Dorsolateral prefrontal cortex (tissue), 120 donors: ENCODE measurements at regions of chr16 and their contacts with region 1.

Region 1: DNA sequence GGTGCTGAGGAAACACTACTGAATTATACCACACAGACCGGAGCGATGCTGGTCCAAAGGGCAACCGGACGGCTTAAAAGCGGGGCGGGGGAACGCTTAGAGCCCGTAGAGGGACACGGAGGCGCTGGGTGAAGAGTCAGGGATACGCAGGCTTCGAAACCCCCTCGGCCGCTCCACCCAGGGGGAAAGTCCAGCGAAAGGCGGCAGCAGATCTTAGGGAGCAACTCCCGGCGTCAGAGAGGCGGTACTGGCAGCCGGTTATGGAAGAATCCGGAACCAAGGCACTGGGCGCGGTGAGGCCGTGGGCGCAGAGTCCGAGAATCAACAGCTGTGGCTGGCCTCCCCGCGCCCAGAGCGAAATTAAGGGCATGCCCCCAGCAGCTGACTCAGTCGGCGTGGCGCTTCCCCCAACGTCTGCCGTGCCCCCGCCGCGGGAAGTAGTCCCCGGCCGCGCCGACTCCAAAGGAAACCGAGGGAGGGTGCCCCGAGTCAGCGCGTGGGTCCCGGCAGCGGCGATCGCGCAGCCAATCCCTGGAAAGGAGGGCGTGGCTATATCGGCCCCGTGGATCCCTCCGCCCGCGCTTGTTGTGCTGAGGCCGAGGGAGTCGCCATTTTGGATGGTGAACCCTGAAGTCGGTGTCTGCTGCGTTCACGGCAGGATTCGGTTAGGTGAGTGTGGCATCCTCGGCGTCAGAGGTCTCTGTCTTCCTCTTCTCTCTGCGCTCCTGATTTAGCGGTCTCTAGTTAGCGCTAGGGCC is at the start of gene IST1:
- DNase-seq: peak; percentile 95 to 99 (median 98)
- H3K4me3 ChIP-seq: peak within 1 kb of the TSS; percentile 69 to 100 (median 98)
- H3K27ac ChIP-seq: peak within 1 kb of the TSS; percentile 79 to 99 (median 96)
- H3K27me3 ChIP-seq: no peaks in the 10 kb centered on the region
- CTCF ChIP-seq: peak in 25 of 56 donors; percentile 3 to 54 (median 24)
- total RNA-seq, gene IST1: 70.6 to 245 (median 162) TPM

Region 2: DNA sequence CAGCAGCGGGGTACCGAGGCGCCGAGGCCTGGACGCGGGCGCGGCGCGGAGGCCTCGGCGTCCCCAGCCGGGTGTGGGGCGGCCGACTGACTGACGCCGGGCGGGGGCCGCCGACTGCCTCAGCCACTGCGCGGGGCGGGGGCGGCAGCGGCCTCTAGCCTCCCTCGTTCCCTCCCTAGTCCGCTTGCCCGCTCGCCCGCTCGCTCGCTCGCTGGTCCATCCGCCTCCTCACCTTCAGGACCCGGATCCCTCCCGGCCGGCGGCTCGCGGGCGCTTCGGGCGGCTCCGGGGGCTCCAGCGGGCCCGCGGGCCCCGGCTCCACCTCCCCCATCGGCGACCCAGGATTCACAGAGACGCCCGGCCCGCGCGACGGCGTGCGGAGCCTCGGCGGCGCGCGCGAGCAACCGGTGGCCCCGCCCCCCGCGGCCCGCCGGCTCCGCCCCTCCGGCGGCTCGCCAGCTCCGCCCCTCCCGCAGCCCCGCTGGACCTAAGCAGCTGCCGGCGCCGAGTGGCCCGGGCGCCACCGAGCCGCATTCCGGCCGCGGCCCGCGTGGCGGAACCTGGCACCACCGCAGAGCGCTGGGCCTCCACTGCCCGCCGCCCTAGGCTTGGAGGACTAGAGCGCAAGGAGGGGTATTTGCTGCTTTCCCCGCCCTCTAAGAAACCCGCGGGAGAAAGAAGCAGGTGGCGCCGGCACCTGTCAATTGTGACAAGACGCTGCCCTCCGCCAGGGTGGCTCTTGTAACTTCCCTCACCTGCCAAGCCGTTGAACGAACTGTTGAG is 171.4 kb before region 1 on chr16:
- intact Hi-C with region 1: loop called in 1 of 2 experiments (anchors 10 kb)
- DNase-seq: peak; percentile 56 to 86 (median 74)
- H3K4me3 ChIP-seq: peak overlapping the region; percentile 59 to 98 (median 86)
- H3K27ac ChIP-seq: peak overlapping the region in 58 of 59 donors; percentile 46 to 94 (median 88)
- H3K27me3 ChIP-seq: no peaks in the 10 kb centered on the region
- CTCF ChIP-seq: peak in 19 of 56 donors; percentile 8 to 42 (median 27)

Region 3: DNA sequence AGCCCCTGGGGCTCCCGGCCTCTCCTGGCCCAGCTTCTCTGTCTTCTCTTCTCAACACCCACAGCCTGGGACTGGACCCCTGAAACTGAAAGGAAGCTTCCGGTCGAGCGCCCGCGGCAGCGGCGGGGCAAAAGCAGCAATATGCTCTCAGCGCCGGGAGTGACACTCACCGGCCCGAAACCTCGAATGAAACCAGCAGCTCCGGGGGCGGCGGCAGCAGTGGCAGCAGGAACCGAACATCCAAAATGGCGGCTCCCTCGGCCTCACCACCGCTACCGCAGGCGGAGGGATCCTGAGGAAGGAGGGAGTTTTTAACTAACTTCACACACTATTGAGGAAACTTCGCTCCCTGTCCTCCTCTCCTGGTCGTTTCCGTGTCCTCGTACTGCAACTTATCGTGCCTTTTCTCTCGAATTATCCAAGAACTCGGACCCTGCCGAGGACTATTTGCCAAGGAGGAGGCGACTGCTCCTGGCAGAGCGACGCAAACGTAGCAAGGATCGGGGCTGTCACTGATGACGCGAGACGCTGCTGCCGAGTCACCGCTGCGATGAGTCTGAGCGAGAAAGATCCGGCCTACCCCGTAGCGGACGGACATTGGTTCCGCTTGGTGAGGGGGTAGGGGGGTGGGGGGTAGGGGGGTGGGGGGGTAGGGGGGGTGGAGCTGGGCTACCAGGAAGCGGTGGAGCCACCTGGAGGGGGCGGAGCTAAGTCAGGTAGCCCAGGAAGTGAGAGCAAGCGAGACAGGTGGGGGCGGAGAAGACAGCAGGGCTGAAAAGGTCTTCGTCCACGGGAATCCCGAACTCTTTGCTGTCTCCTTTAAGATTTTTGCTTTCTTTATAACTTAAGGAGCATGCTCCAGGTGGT is 86.3 kb before region 1 on chr16 and contains the start of gene AP1G1:
- intact Hi-C with region 1: loop called (anchors 1 to 2 kb)
- DNase-seq: peak; percentile 83 to 97 (median 95)
- H3K4me3 ChIP-seq: peak within 1 kb of the TSS; percentile 66 to 100 (median 99)
- H3K27ac ChIP-seq: peak within 1 kb of the TSS; percentile 87 to 99 (median 97)
- H3K27me3 ChIP-seq: no peaks in the 10 kb centered on the region
- CTCF ChIP-seq: peak in 13 of 56 donors; percentile 3 to 39 (median 21)
- total RNA-seq, gene AP1G1: 81.3 to 131 (median 109) TPM

Region 4: GRCh38 chr16:71845639-71846430 is 49.3 kb before region 1 on chr16 and contains the start of gene ATXN1L:
- intact Hi-C with region 1: loop called in 1 of 2 experiments (anchors 5 kb)
- DNase-seq: peak; percentile 73 to 97 (median 86)
- H3K4me3 ChIP-seq: peak within 1 kb of the TSS; percentile 69 to 100 (median 99)
- H3K27ac ChIP-seq: peak within 1 kb of the TSS; percentile 14 to 96 (median 85)
- H3K27me3 ChIP-seq: no peaks in the 10 kb centered on the region
- CTCF ChIP-seq: peak in 36 of 56 donors; percentile 14 to 56 (median 31)
- total RNA-seq, gene ATXN1L: 20.3 to 34.3 (median 26.3) TPM

Region 5: GRCh38 chr16:71883849-71884638 is 11.1 kb before region 1 on chr16 and contains the start of gene ZNF821:
- intact Hi-C with region 1: loop called in 1 of 2 experiments (anchors 1 kb)
- DNase-seq: peak; percentile 45 to 87 (median 68)
- H3K4me3 ChIP-seq: peak within 1 kb of the TSS; percentile 57 to 99 (median 90)
- H3K27ac ChIP-seq: peak within 1 kb of the TSS; percentile 67 to 99 (median 94)
- H3K27me3 ChIP-seq: no peaks in the 10 kb centered on the region
- CTCF ChIP-seq: peak in 41 of 56 donors; percentile 3 to 60 (median 37)
- total RNA-seq, gene ZNF821: 8.8 to 35.9 (median 22.5) TPM

Region 6: DNA sequence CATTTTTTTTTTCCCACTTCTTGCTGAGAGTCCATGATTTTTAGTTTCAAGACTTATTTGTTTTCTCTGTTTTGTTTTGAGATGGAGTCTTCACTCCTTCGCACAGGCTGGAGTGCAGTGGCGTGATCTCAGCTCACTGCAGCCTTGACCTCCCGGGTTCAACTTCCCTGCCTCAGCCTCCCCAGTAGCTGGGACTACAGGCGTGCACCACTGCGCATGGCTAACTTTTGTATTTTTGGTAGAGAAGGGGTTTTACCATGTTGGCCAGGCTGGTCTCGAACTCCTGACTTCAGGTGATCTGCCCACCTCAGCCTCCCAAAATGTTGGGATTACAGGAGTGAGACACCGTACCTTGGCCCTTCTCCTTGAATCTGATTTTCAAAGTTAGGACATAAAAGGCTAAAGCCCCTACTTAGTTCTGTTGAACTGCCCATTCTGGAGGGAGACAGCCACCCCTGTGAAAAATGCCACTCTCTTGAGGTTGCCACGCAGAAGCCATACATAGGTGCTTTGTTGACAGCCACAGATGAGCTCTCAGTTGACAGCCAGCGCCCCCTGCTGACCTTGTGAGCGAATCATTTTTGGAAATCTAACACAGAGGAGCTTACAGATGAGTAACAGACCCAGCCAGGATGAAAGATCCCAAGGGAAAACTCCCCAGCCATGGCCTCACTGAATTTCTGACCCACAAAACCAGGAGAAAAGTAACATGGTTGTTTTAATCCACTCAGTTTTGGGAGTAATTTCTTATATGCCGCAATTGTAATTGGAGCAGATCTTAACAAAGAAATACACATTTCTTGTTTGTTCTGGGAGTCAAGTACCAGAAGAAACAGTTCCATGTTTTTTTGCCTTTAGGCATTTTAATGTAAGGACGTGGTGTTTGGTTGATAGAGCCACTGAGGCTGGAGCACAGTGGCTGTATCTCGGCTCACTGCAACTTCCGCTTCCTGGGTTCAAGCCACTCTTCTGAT is 66.3 kb after region 1 on chr16:
- intact Hi-C with region 1: loop called in 1 of 2 experiments (anchors 5 kb)
- DNase-seq: peak; percentile 67 to 93 (median 87)
- H3K4me3 ChIP-seq: peak overlapping the region in 2 of 59 donors; percentile 6 to 9
- H3K27ac ChIP-seq: peak overlapping the region in 5 of 59 donors; percentile 6 to 55 (median 36)
- H3K27me3 ChIP-seq: no peaks in the 10 kb centered on the region
- CTCF ChIP-seq: peak; percentile 55 to 90 (median 82)

Region 7: DNA sequence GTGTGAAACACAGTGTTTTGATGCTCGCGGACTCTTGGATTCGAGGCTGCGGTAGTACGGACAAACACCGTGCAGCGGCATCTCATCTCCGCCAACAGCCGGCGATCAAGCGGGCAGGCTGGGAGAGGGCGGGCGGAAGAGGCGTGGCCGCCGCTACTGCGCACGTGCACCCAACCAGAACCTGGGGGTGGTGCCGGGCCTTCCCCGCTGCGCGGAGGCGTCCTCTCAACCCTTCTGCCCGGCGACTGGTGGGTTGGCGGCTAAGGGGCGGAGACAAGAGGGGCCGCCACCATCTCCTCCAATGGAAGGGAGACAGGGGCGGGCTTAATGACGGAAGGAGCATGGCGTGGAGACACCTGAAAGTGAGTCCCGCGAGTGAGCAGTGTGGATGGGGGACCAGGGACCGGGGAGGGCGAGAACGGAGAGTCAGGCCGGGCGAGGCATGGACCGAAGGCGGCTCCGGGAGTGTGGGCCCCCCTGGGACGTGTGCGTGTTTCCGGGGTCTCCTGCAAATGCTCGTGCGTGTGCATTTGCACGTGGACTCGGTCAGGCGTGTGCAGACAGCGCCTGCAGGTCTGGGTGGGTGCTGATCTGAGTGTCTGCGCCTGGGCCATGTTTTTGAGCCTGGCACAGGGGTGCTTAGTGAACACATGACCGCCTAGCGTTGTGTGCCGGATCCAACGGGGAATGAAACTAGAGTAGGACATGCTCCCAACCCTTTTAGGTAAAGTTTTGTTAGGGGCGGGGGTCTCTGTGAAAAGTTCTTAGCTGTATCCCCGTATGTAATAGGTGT is 113.5 kb after region 1 on chr16 and contains the start of gene DHODH:
- intact Hi-C with region 1: loop called in 1 of 2 experiments (anchors 5 kb)
- DNase-seq: peak; percentile 93 to 99 (median 98)
- H3K4me3 ChIP-seq: peak within 1 kb of the TSS; percentile 64 to 100 (median 94)
- H3K27ac ChIP-seq: peak within 1 kb of the TSS in 42 of 59 donors; percentile 3 to 79 (median 54)
- H3K27me3 ChIP-seq: no peaks in the 10 kb centered on the region
- CTCF ChIP-seq: peak in 48 of 56 donors; percentile 9 to 64 (median 39)
- total RNA-seq, gene DHODH: 2.7 to 10.4 (median 5.8) TPM